ENCODE measurements at regions of chr7 and their contacts with region 1.

Region 1: GRCh38 chr7:992709-993607 is 10.0 kb downstream of the CYP2W1 start:
- DNase-seq: peak; percentile 98
- ATAC-seq: peak; percentile 97

Region 2: DNA sequence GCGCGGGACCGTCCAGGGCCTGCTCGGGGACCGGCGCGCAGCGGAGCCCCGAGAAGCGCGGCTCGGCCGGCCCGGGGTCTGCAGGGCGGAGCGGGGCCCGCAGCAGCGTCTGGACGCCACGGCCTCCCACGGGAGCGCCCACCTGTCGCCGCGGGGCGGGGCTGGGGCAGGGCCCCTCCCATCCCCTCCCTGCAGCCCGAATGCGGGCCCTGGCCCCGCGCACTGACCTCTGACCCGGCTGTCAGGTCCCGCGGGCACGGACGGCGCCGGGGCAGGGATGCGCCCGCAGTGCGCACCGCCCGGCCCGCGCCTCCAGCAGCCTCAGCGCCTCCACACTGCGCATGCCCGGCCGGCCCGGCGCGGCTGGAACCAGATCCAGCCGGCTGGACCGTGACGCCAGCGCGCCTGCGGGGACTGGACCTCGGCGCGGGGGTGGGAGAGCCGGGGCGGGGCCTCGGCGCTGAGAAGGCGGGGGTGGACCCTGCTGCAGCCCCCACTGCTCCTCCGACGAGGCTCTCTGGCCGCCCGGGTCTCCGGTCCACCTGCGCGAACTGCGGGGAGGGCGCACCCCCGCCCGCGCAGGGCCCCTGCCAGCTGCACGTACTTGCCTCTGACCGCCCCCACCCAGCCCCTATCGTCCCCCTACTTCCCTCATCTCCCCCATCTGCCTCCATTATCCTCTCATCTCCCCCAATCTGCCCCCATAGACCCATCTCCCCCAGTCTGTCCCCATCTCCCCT is 35.2 kb after region 1 on chr7:
- intact Hi-C with region 1: no loop called
- DNase-seq: peak; percentile 95
- ATAC-seq: peak; percentile 93

Region 3: DNA sequence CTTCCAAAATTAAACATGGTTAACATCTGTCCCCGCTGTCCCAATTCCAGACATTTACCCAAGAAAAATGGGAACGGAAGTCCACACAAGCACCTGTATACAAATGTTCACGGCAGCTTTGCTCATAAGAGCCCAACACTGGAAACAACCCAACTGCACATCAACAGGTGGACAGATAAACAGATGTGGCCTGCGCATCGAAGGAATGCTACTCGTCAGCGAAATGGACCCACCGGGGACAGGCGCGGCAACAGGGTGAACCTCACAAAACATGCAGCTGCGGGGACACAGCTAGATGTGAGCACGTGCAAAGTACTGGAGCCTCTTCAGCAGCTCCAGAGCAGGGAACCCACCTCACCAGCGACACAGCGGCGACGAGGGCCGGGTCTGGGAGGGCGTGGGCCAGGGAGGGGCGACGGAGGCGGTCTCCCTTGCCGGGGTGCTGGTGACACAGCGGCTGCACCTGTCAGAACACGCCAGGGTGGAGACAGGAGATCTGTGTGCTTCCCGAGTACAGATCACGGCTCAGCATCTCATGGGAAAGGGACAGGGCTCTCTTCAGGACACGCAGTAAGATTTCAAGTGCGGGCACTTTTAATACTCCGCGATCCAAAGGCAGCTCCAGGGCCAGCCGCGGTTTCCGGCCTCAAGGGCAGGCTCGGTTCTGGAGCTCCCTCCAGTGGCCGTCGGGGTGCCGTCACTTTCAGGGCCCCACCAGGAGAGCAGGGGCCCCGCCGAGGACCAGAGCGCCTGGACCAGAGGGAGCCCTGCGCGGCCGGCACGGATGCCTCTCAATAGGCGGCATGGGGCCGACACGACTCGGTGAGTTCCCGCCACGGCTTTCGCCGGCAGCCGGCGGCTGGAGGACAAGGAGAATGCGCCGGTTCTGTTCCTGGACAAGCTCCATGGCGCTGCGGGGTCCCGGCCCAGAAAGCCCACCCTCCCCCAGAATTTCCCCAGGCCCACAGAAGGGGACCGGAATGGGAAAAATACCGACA is 72.6 kb after region 1 on chr7:
- intact Hi-C with region 1: loop called (anchors 1 kb)
- DNase-seq: peak; percentile 91
- ATAC-seq: peak; percentile 97

Region 4: GRCh38 chr7:1144269-1144771 is 151.4 kb after region 1 on chr7:
- intact Hi-C with region 1: loop called (anchors 5 kb)
- DNase-seq: peak; percentile 64
- ATAC-seq: peak; percentile 90

Measured in Right ventricle myocardium inferior (tissue), 1 donor.